Activated CD8-positive, alpha-beta T cell treated with anti-CD3 and anti-CD28 coated beads, Interleukin-2, amount 10 ng/mL, durations not matched to agents 7 days and 5 days (primary cell): ENCODE measurements at regions of chr5 and their contacts with region 1.

Region 1: GRCh38 chr5:172006321-172007174 is at the start of gene FBXW11:
- DNase-seq: peak; percentile 97
- ATAC-seq: peak; percentile 90
- H3K4me3 Mint-ChIP-seq: peak within 1 kb of the TSS; percentile 86
- H3K27ac Mint-ChIP-seq: peak within 1 kb of the TSS; percentile 96
- H3K4me1 Mint-ChIP-seq: peaks cover 47% of the 10 kb centered on the region
- H3K27me3 Mint-ChIP-seq: no peaks in the 10 kb centered on the region
- total RNA-seq, gene FBXW11: 26.3 to 27.1 TPM

Region 2: DNA sequence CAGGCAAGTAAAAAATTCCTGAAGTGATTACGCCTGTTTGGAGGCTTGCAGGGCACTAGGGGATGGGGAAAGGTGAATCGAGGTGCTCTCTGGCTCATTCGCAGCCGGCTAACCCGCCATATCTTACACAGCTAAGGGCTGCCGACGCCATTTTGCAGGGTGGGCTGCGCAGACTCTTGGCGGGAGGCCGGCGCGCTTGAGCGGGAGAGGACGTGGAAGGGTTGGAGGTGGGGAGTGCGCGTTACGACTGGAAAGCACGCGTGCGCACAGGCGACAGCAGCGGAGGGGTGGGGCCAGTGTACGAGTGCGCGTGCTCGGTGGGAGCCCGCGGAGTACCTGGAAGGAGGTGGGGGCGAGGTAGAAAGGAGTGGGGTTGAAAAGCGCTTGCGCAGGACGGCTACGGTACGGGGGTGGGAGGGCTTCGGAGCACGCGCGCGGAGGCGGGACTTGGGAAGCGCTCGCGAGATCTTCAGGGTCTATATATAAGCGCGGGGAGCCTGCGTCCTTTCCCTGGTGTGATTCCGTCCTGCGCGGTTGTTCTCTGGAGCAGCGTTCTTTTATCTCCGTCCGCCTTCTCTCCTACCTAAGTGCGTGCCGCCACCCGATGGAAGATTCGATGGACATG is 619.1 kb before region 1 on chr5 and contains the start of gene NPM1:
- CTCF ChIA-PET with region 1: no interaction called
- POLR2A ChIA-PET with region 1: interaction called, 11 read pairs
- DNase-seq: peak; percentile 99
- ATAC-seq: peak; percentile 83
- H3K4me3 Mint-ChIP-seq: peak within 1 kb of the TSS; percentile 99
- H3K27ac Mint-ChIP-seq: peak within 1 kb of the TSS; percentile 99
- H3K4me1 Mint-ChIP-seq: peaks cover 33% of the 10 kb centered on the region
- H3K27me3 Mint-ChIP-seq: no peaks in the 10 kb centered on the region
- total RNA-seq, gene NPM1: 1,308 to 1,394 TPM

Region 3: GRCh38 chr5:171907725-171908343 is 98.7 kb before region 1 on chr5:
- CTCF ChIA-PET with region 1: interaction called, 79 read pairs
- POLR2A ChIA-PET with region 1: interaction called, 5 read pairs
- DNase-seq: peak; percentile 72
- ATAC-seq: peak; percentile 84
- H3K4me3 Mint-ChIP-seq: no peak overlapping the region
- H3K27ac Mint-ChIP-seq: no peak overlapping the region
- H3K4me1 Mint-ChIP-seq: peaks cover 28% of the 10 kb centered on the region
- H3K27me3 Mint-ChIP-seq: no peaks in the 10 kb centered on the region

Region 4: GRCh38 chr5:171961117-171961516 is 45.4 kb before region 1 on chr5:
- CTCF ChIA-PET with region 1: interaction called, 7 read pairs
- POLR2A ChIA-PET with region 1: interaction called, 17 read pairs
- DNase-seq: peak; percentile 24
- ATAC-seq: peak; percentile 63
- H3K4me3 Mint-ChIP-seq: no peak overlapping the region
- H3K27ac Mint-ChIP-seq: peak overlapping the region; percentile 39
- H3K4me1 Mint-ChIP-seq: peaks cover 63% of the 10 kb centered on the region
- H3K27me3 Mint-ChIP-seq: no peaks in the 10 kb centered on the region

Region 5: DNA sequence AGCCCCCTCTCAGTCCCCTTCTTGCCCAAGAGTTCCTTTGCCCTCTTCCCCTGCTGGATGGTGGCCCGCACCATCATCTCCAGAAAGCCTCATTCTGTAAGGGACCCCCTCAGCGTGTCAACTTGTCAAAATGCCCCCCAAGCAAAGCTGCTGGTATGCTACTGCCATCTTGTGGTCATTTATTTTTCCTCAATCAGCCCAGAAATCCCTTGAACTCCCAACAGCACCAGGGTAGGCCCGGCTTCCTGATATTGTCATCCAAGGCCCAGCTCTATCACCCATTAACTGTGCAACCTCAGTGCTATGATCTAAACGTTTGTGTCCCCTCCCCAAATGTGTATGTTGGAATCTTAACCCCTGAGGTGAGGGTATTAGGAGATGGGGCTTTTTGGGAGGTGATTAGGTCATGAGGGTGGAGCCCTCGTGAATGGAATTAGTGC is 53.1 kb after region 1 on chr5:
- CTCF ChIA-PET with region 1: interaction called, 15 read pairs
- POLR2A ChIA-PET with region 1: interaction called, 6 read pairs
- DNase-seq: no peak
- ATAC-seq: peak; percentile 45
- H3K4me3 Mint-ChIP-seq: no peak overlapping the region
- H3K27ac Mint-ChIP-seq: peak overlapping the region; percentile 65
- H3K4me1 Mint-ChIP-seq: peaks cover 17% of the 10 kb centered on the region
- H3K27me3 Mint-ChIP-seq: no peaks in the 10 kb centered on the region

Region 6: DNA sequence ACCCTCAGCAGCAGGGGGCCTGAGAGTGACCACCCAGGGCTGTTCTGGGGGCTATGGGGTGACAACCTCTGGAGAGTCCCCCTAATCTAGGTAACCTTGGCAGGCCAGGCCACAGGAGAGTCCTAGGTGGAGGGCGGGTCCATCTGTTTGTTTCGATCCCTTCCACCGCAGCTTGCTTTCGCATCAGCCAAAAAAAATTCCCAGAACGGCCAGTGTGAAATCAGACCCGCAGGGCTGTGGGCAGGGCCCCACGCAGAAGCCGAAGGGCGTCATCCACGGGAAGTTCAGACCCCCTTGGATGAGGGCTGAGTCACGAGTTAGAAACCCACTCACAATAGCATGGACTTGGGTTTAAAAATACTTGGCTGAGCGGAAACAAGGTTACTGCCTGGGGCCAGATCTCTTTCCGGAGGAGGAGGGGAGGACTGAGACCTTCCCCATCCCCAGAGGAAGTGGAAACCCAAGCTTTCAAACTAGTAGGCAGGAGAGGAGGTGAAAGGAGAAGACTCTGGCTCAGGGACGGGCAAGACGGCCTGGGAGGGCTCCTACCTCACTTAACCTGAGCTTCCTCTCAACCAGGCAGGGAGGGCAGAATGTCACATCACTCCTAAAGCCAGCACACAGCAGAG is 172.9 kb after region 1 on chr5:
- CTCF ChIA-PET with region 1: no interaction called
- POLR2A ChIA-PET with region 1: interaction called, 16 read pairs
- DNase-seq: peak; percentile 70
- ATAC-seq: peak; percentile 18
- H3K4me3 Mint-ChIP-seq: peak overlapping the region; percentile 85
- H3K27ac Mint-ChIP-seq: peak overlapping the region; percentile 98
- H3K4me1 Mint-ChIP-seq: peaks cover 92% of the 10 kb centered on the region
- H3K27me3 Mint-ChIP-seq: no peaks in the 10 kb centered on the region